ENCODE measurements at regions of chr5 and their contacts with region 1.

Region 1: GRCh38 chr5:150758531-150759333 is at the start of gene DCTN4:
- DNase-seq: peak; percentile 96
- H3K4me3 Mint-ChIP-seq: no peak within 1 kb of the TSS
- H3K27ac Mint-ChIP-seq: no peak within 1 kb of the TSS
- H3K4me1 Mint-ChIP-seq: peaks cover 38% of the 10 kb centered on the region
- H3K27me3 Mint-ChIP-seq: no peaks in the 10 kb centered on the region
- total RNA-seq, gene DCTN4: 41.0 to 47.7 TPM

Region 2: GRCh38 chr5:150449517-150450339 is 309.0 kb before region 1 on chr5 and contains the start of gene RPS14:
- CTCF ChIA-PET with region 1: no interaction called
- intact Hi-C with region 1: loop called (anchors 1 kb)
- DNase-seq: peak; percentile 97
- H3K4me3 Mint-ChIP-seq: peak within 1 kb of the TSS; percentile 93
- H3K27ac Mint-ChIP-seq: peak within 1 kb of the TSS; percentile 99
- H3K4me1 Mint-ChIP-seq: peaks cover 33% of the 10 kb centered on the region
- H3K27me3 Mint-ChIP-seq: no peaks in the 10 kb centered on the region
- total RNA-seq, gene RPS14: 4,594 to 4,738 TPM

Region 3: GRCh38 chr5:150789943-150790611 is 31.3 kb after region 1 on chr5:
- CTCF ChIA-PET with region 1: interaction called, 3 read pairs
- intact Hi-C with region 1: loop called (anchors 1 kb)
- DNase-seq: peak; percentile 92
- H3K4me3 Mint-ChIP-seq: peak overlapping the region; percentile 64
- H3K27ac Mint-ChIP-seq: peak overlapping the region; percentile 97
- H3K4me1 Mint-ChIP-seq: peaks cover 65% of the 10 kb centered on the region
- H3K27me3 Mint-ChIP-seq: no peaks in the 10 kb centered on the region

Region 4: GRCh38 chr5:150946351-150946905 is 187.7 kb after region 1 on chr5:
- CTCF ChIA-PET with region 1: no interaction called
- intact Hi-C with region 1: no loop called
- DNase-seq: peak; percentile 4
- H3K4me3 Mint-ChIP-seq: no peak overlapping the region
- H3K27ac Mint-ChIP-seq: no peak overlapping the region
- H3K4me1 Mint-ChIP-seq: no peaks in the 10 kb centered on the region
- H3K27me3 Mint-ChIP-seq: peaks cover 21% of the 10 kb centered on the region